Caco-2 (cell line): ENCODE measurements at regions of chr18 and their contacts with region 1.

Region 1: DNA sequence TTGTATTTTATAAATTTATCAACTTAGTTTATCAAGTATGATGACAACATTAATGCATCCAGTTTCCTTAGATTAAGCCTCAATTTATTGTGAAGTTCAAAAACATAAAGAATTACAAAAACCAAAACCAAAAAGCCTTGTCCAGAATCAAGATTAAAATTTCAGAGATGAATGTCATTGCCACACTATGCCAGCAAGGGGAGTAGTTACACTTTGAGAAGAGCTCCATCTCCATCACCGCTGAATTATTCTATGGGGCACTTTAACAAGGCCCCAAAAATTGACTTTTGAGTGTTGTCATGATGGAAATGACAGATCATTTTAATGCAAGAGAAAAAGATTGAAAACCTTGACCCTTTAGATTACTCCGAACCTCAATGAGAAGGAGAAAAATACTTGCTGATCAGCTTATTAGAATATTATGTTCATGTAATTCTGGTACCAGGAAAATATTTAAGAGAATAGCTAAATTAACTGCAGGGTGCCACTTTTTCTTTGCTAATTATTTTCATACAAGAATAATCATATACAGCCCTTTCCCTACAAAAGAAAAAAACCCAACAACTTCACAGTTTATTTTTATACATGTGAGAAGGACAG is 152.5 kb upstream of the AQP4 start:
- DNase-seq: no peak
- H3K4me3 ChIP-seq: no peak overlapping the region
- H3K4me3 Mint-ChIP-seq: no peak overlapping the region
- H3K27ac Mint-ChIP-seq: no peak overlapping the region
- H3K4me1 ChIP-seq: peaks cover 16% of the 10 kb centered on the region
- H3K4me1 Mint-ChIP-seq: peaks cover 30% of the 10 kb centered on the region
- H3K27me3 ChIP-seq: no peaks in the 10 kb centered on the region
- H3K27me3 Mint-ChIP-seq: no peaks in the 10 kb centered on the region
- CTCF ChIP-seq: peak in 1 of 2 experiments; percentile 18

Region 2: GRCh38 chr18:27062802-27063201 is 44.8 kb after region 1 on chr18:
- CTCF ChIA-PET with region 1: no interaction called
- POLR2A ChIA-PET with region 1: no interaction called
- intact Hi-C with region 1: loop called (anchors 1 kb)
- DNase-seq: no peak
- H3K4me3 ChIP-seq: no peak overlapping the region
- H3K4me3 Mint-ChIP-seq: no peak overlapping the region
- H3K27ac Mint-ChIP-seq: no peak overlapping the region
- H3K4me1 ChIP-seq: peaks cover 31% of the 10 kb centered on the region
- H3K4me1 Mint-ChIP-seq: peaks cover 7% of the 10 kb centered on the region
- H3K27me3 ChIP-seq: no peaks in the 10 kb centered on the region
- H3K27me3 Mint-ChIP-seq: no peaks in the 10 kb centered on the region
- CTCF ChIP-seq: no peak

Region 3: DNA sequence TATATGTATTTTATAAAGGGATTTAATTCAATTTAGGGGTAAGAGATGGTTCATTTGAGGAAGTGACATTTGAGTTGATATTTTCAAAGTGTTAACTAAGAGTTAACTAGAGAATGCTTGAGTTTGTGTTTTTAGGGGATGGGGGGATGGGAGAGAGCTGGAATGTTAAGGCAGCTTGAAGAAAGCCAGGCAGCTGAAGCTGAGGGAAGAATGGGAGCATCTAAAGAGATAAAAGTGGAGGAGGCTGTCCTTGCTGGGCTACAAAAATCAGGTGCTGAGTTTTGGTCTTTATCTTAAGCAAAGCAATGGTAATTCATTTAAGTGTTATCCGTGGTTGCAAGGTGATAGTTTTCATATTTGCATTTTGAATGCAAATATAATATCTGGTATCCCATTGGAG is 157.9 kb after region 1 on chr18:
- CTCF ChIA-PET with region 1: no interaction called
- POLR2A ChIA-PET with region 1: no interaction called
- intact Hi-C with region 1: no loop called
- DNase-seq: no peak
- H3K4me3 ChIP-seq: no peak overlapping the region
- H3K4me3 Mint-ChIP-seq: no peak overlapping the region
- H3K27ac Mint-ChIP-seq: no peak overlapping the region
- H3K4me1 ChIP-seq: peaks cover 19% of the 10 kb centered on the region; the same call in 1 of the 2 replicates
- H3K4me1 Mint-ChIP-seq: peaks cover 14% of the 10 kb centered on the region
- H3K27me3 ChIP-seq: no peaks in the 10 kb centered on the region
- H3K27me3 Mint-ChIP-seq: no peaks in the 10 kb centered on the region
- CTCF ChIP-seq: no peak

Region 4: DNA sequence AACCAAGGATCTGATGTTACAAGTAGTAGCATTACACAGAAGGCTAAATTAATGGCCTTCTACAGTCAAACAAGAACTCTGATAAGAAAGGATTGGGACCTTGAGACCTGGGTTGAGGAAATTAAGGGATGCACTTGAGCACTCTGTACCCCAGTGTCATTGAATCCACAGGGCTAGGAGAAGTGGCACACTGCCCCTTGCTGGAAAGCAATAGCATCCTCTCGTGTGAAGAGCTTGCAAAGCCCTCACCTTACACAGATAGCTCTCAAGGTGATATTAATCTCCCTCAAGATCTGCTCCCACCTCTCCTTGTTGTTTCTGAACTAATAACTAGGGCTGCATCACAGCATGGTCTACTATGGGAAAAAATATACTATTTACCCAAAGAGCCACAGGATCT is 193.6 kb after region 1 on chr18:
- CTCF ChIA-PET with region 1: no interaction called
- POLR2A ChIA-PET with region 1: no interaction called
- intact Hi-C with region 1: loop called (anchors 1 kb)
- DNase-seq: peak in 1 of 2 experiments; percentile 1
- H3K4me3 ChIP-seq: no peak overlapping the region
- H3K4me3 Mint-ChIP-seq: no peak overlapping the region
- H3K27ac Mint-ChIP-seq: no peak overlapping the region
- H3K4me1 ChIP-seq: no peaks in the 10 kb centered on the region
- H3K4me1 Mint-ChIP-seq: no peaks in the 10 kb centered on the region
- H3K27me3 ChIP-seq: no peaks in the 10 kb centered on the region
- H3K27me3 Mint-ChIP-seq: no peaks in the 10 kb centered on the region
- CTCF ChIP-seq: peak in 1 of 2 experiments; percentile 27

Region 5: GRCh38 chr18:27298214-27298804 is 280.3 kb after region 1 on chr18:
- CTCF ChIA-PET with region 1: no interaction called
- POLR2A ChIA-PET with region 1: no interaction called
- intact Hi-C with region 1: loop called (anchors 1 kb)
- DNase-seq: peak in 1 of 2 experiments; percentile 7
- H3K4me3 ChIP-seq: no peak overlapping the region
- H3K4me3 Mint-ChIP-seq: no peak overlapping the region
- H3K27ac Mint-ChIP-seq: no peak overlapping the region
- H3K4me1 ChIP-seq: no peaks in the 10 kb centered on the region
- H3K4me1 Mint-ChIP-seq: no peaks in the 10 kb centered on the region
- H3K27me3 ChIP-seq: no peaks in the 10 kb centered on the region
- H3K27me3 Mint-ChIP-seq: peaks cover 2% of the 10 kb centered on the region
- CTCF ChIP-seq: peak; percentile 19 to 25